Lower leg skin (tissue), 4 donors: ENCODE measurements at regions of chr15 and their contacts with region 1.

Region 1: DNA sequence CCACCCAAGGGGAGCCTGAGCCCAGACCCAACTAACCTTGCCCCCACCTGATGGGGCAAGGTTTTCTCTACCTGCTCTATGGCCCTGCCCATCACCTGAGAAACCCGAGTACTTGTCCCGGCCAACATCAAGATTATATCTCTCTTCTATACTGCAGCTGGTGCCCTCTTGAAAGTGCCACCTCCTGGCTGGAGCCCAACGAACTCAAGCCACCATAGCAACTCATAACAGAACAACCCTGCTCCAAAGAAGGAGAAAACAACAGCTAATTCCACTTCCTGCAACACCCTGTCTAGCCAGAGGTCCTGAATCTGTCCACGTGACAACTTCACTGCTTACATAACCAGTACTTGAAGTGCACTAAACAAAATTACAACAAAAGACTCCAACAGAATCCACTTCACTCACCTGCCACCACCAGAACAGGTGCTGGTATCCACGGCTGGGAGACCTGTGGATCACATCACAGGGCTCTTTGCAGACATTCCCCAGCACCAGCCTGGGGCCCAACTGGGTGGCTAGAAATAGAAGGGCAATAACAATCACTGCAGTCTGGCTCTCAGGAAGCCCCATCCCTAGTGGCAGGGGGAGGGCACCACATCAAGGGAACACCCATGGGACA is 49.2 kb downstream of the PIERCE2 start:
- DNase-seq: no peak
- H3K4me3 ChIP-seq: no peak overlapping the region
- CTCF ChIP-seq: no peak
- POLR2A ChIP-seq: no peak

Region 2: GRCh38 chr15:56775641-56776040 is 1318.1 kb after region 1 on chr15:
- intact Hi-C with region 1: loop called (anchors 5 kb)
- DNase-seq: no peak
- H3K4me3 ChIP-seq: no peak overlapping the region
- CTCF ChIP-seq: no peak
- POLR2A ChIP-seq: no peak